GM10248 (cell line): ENCODE measurements at regions of chr7 and their contacts with region 1.

Region 1: GRCh38 chr7:14673202-14673601 is 229.3 kb downstream of the DGKB start:
- DNase-seq: no peak
- CTCF ChIP-seq: no peak

Region 2: GRCh38 chr7:14691597-14692203 is 18.5 kb after region 1 on chr7:
- CTCF ChIA-PET with region 1: interaction called, 12 read pairs
- POLR2A ChIA-PET with region 1: no interaction called
- DNase-seq: no peak
- CTCF ChIP-seq: peak; percentile 84

Region 3: GRCh38 chr7:15236952-15237351 is 563.8 kb after region 1 on chr7:
- CTCF ChIA-PET with region 1: no interaction called
- POLR2A ChIA-PET with region 1: no interaction called
- DNase-seq: no peak
- CTCF ChIP-seq: no peak